Dendritic cell treated with granulocyte-macrophage colony-stimulating factor and Interleukin-4, amounts not matched to agents 40 ng/mL and 50 ng/mL, for 4 days (primary cell): ENCODE measurements at regions of chr3 and their contacts with region 1.

Region 1: DNA sequence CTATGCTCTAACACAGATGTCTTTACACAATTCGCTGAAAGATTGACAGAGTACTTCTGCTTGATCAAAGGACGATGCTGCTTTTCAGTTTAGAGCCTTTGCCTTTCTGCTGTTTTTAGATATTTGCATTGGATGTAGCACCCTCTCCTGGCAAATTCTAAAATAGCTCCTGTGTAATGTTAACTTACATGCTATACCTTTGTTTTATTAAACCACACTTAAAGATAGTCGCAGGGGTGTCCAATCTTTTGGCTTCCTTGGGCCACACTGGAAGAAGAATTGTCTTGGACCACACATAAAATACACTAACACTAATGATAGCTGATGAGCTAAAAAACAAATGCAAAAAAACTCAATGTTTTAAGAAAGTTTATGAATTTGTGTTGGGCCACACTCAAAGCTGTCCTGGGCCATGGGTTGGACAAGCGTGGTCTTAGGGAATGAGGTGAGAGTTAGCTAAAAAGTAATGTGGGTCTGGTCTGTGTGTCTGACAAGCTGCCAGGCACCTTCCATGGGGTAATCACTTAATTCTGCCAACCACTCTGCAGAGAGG is 62.9 kb downstream of the ATG7 start:
- H3K4me3 Mint-ChIP-seq: no peak overlapping the region
- H3K27ac Mint-ChIP-seq: no peak overlapping the region
- H3K4me1 Mint-ChIP-seq: peaks cover 12% of the 10 kb centered on the region
- H3K27me3 Mint-ChIP-seq: no peaks in the 10 kb centered on the region

Region 2: GRCh38 chr3:10945683-10946287 is 389.3 kb before region 1 on chr3:
- intact Hi-C with region 1: loop called (anchors 10 kb)
- H3K4me3 Mint-ChIP-seq: no peak overlapping the region
- H3K27ac Mint-ChIP-seq: no peak overlapping the region
- H3K4me1 Mint-ChIP-seq: no peaks in the 10 kb centered on the region
- H3K27me3 Mint-ChIP-seq: peaks cover 23% of the 10 kb centered on the region

Region 3: DNA sequence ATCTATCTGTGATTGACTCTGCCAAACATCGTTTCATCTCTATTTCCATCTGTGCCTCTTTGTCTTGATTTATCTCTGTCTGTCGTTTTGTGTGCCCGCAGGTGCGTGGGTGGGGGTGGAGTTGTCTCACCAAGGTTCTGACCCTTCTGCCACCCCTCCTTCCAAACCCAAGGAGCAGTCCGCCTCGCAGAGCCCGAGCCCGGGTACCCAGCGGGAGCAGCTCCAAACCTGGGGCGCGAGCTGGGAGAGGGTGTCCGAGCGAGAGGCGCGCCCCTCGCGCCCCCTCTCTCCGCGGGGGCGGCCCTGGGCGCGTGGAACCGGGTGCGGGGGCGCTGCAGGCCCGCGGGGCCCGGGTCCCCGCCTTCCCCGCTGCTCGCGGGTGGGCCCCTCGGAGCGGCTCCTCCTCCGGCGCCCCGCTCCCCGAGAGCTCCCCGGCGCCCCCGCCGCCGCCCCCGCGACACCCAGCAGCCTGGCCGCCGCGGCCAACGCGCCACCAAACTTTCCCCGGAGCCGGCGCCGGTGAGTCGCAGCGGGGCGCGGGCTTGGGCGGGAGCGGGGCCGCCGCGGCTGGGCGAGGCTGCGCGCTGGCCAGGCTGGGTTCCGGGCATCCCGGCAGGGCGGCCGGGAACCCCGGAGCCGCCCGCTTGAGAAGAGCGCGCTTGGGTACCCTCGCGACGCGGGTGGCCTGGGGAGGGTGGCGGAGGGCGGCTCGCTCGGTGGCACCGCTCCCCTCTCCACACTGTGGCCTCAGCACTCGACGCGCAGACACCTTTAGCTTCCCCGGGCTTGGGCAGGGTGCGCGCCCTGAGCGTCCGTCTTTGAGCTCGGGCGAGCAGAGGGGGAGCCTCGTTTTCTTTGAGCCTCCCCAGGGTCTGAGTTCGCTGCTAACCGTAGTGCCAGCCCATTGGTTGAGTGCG is 180.8 kb before region 1 on chr3 and contains the start of gene HRH1:
- intact Hi-C with region 1: no loop called
- H3K4me3 Mint-ChIP-seq: peak within 1 kb of the TSS; percentile 99
- H3K27ac Mint-ChIP-seq: peak within 1 kb of the TSS; percentile 82
- H3K4me1 Mint-ChIP-seq: peaks cover 75% of the 10 kb centered on the region
- H3K27me3 Mint-ChIP-seq: peaks cover 8% of the 10 kb centered on the region

Region 4: GRCh38 chr3:11164607-11165006 is 170.5 kb before region 1 on chr3:
- intact Hi-C with region 1: loop called (anchors 5 kb)
- H3K4me3 Mint-ChIP-seq: no peak overlapping the region
- H3K27ac Mint-ChIP-seq: no peak overlapping the region
- H3K4me1 Mint-ChIP-seq: peaks cover 97% of the 10 kb centered on the region
- H3K27me3 Mint-ChIP-seq: peaks cover 2% of the 10 kb centered on the region